Naive thymus-derived CD4-positive, alpha-beta T cell (primary cell): ENCODE measurements at regions of chr1 and their contacts with region 1.

Region 1: DNA sequence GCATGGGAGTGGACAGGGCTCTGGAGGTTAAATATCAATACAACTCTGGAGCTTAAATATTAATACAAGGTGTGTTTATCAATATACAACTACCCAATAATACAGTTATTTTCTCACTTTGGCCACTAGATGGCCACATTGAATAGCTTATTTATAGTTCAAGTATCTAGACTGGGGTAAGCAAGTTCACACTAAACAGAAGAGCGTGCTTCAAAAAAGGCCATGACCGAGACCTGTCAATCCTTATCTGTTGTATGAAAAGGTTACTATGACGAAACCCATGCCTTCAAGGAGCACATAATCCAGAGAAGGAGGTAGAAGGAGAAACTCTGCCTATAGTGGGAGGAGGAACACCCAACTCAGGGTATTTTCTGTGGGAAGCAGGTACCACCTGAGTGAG is 29.1 kb downstream of the CHML start:
- DNase-seq: peak in 7 of 9 donors; percentile 34 to 72 (median 59)
- ATAC-seq: peak; percentile 87
- H3K4me3 ChIP-seq: no peak overlapping the region
- H3K4me3 Mint-ChIP-seq: no peak overlapping the region
- H3K27ac ChIP-seq: no peak overlapping the region
- H3K27ac Mint-ChIP-seq: no peak overlapping the region
- H3K4me1 ChIP-seq: peaks cover 0 to 3% of the 10 kb centered on the region in 2 donors
- H3K4me1 Mint-ChIP-seq: peaks cover 0 to 6% (median 0%) of the 10 kb centered on the region in 7 donors
- H3K27me3 ChIP-seq: no peaks in the 10 kb centered on the region
- H3K27me3 Mint-ChIP-seq: no peaks in the 10 kb centered on the region

Region 2: GRCh38 chr1:241677201-241677600 is 66.1 kb after region 1 on chr1:
- CTCF ChIA-PET with region 1: no interaction called
- POLR2A ChIA-PET with region 1: no interaction called
- intact Hi-C with region 1: loop called in 1 of 2 experiments (anchors 2 kb)
- DNase-seq: peak in 8 of 9 donors; percentile 23 to 83 (median 75)
- ATAC-seq: peak; percentile 97
- H3K4me3 ChIP-seq: peak overlapping the region; percentile 28
- H3K4me3 Mint-ChIP-seq: peak overlapping the region; percentile 53 to 88 (median 76)
- H3K27ac ChIP-seq: peak overlapping the region; percentile 55
- H3K27ac Mint-ChIP-seq: peak overlapping the region; percentile 85 to 97 (median 90)
- H3K4me1 ChIP-seq: peaks cover 8 to 21% of the 10 kb centered on the region in 2 donors
- H3K4me1 Mint-ChIP-seq: peaks cover 4 to 30% (median 20%) of the 10 kb centered on the region in 7 donors
- H3K27me3 ChIP-seq: no peaks in the 10 kb centered on the region
- H3K27me3 Mint-ChIP-seq: peaks cover 0 to 6% (median 0%) of the 10 kb centered on the region in 5 donors

Region 3: GRCh38 chr1:241834733-241835377 is 223.8 kb after region 1 on chr1:
- CTCF ChIA-PET with region 1: no interaction called
- POLR2A ChIA-PET with region 1: no interaction called
- intact Hi-C with region 1: loop called (anchors 1 to 2 kb)
- DNase-seq: no peak
- ATAC-seq: no peak
- H3K4me3 ChIP-seq: no peak overlapping the region
- H3K4me3 Mint-ChIP-seq: no peak overlapping the region
- H3K27ac ChIP-seq: no peak overlapping the region
- H3K27ac Mint-ChIP-seq: no peak overlapping the region
- H3K4me1 ChIP-seq: no peaks in the 10 kb centered on the region
- H3K4me1 Mint-ChIP-seq: peaks cover 0 to 2% (median 0%) of the 10 kb centered on the region in 7 donors
- H3K27me3 ChIP-seq: no peaks in the 10 kb centered on the region
- H3K27me3 Mint-ChIP-seq: peaks cover 0 to 29% (median 11%) of the 10 kb centered on the region in 5 donors

Region 4: DNA sequence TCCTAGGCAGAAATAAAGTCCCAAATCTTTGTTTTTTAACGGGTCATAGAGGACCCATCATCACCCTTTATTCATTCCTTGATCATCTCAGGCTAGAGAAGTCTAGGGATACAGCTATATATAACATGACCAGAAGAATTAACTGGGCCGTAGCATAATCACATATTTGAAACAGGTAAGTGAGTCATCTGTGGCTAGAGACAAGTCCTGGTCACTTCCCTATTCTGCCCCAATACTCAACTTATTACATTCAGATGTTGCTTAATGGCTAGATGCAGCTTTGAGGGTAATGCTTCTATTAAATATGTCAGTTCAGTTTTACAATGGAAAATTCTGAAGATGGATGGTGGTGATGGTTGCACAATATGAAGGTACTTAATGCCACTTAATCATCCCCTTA is 283.9 kb after region 1 on chr1:
- CTCF ChIA-PET with region 1: interaction called, 4 read pairs
- POLR2A ChIA-PET with region 1: no interaction called
- intact Hi-C with region 1: loop called in 1 of 2 experiments (anchors 1 kb)
- DNase-seq: no peak
- ATAC-seq: no peak
- H3K4me3 ChIP-seq: no peak overlapping the region
- H3K4me3 Mint-ChIP-seq: no peak overlapping the region
- H3K27ac ChIP-seq: no peak overlapping the region
- H3K27ac Mint-ChIP-seq: no peak overlapping the region
- H3K4me1 ChIP-seq: no peaks in the 10 kb centered on the region
- H3K4me1 Mint-ChIP-seq: no peaks in the 10 kb centered on the region
- H3K27me3 ChIP-seq: no peaks in the 10 kb centered on the region
- H3K27me3 Mint-ChIP-seq: no peaks in the 10 kb centered on the region

Region 5: GRCh38 chr1:242017584-242018233 is 406.6 kb after region 1 on chr1:
- CTCF ChIA-PET with region 1: interaction called, 3 read pairs
- POLR2A ChIA-PET with region 1: no interaction called
- intact Hi-C with region 1: loop called (anchors 2 to 5 kb)
- DNase-seq: peak in 6 of 9 donors; percentile 6 to 34 (median 14)
- ATAC-seq: peak; percentile 64
- H3K4me3 ChIP-seq: no peak overlapping the region
- H3K4me3 Mint-ChIP-seq: no peak overlapping the region
- H3K27ac ChIP-seq: no peak overlapping the region
- H3K27ac Mint-ChIP-seq: no peak overlapping the region
- H3K4me1 ChIP-seq: no peaks in the 10 kb centered on the region
- H3K4me1 Mint-ChIP-seq: no peaks in the 10 kb centered on the region
- H3K27me3 ChIP-seq: no peaks in the 10 kb centered on the region
- H3K27me3 Mint-ChIP-seq: no peaks in the 10 kb centered on the region

Region 6: GRCh38 chr1:243325305-243325890 is 1714.3 kb after region 1 on chr1:
- CTCF ChIA-PET with region 1: no interaction called
- POLR2A ChIA-PET with region 1: no interaction called
- intact Hi-C with region 1: loop called in 1 of 2 experiments (anchors 2 kb)
- DNase-seq: peak in 7 of 9 donors; percentile 27 to 61 (median 44)
- ATAC-seq: peak; percentile 66
- H3K4me3 ChIP-seq: no peak overlapping the region
- H3K4me3 Mint-ChIP-seq: no peak overlapping the region
- H3K27ac ChIP-seq: no peak overlapping the region
- H3K27ac Mint-ChIP-seq: no peak overlapping the region
- H3K4me1 ChIP-seq: no peaks in the 10 kb centered on the region
- H3K4me1 Mint-ChIP-seq: peaks cover 0 to 2% (median 0%) of the 10 kb centered on the region in 7 donors
- H3K27me3 ChIP-seq: no peaks in the 10 kb centered on the region
- H3K27me3 Mint-ChIP-seq: no peaks in the 10 kb centered on the region